Activated CD4-positive, alpha-beta T cell treated with anti-CD3 and anti-CD28 coated beads, Interleukin-2, amount 10 ng/mL, durations not matched to agents 24 days and 14 days (primary cell): ENCODE measurements at regions of chr14 and their contacts with region 1.

Region 1: GRCh38 chr14:88013750-88014349 is 8.9 kb downstream of the GPR65 start:
- DNase-seq: peak; percentile 72
- H3K4me3 Mint-ChIP-seq: no peak overlapping the region
- H3K27ac Mint-ChIP-seq: peak overlapping the region; percentile 4
- H3K4me1 Mint-ChIP-seq: peaks cover 46% of the 10 kb centered on the region
- H3K27me3 Mint-ChIP-seq: no peaks in the 10 kb centered on the region

Region 2: DNA sequence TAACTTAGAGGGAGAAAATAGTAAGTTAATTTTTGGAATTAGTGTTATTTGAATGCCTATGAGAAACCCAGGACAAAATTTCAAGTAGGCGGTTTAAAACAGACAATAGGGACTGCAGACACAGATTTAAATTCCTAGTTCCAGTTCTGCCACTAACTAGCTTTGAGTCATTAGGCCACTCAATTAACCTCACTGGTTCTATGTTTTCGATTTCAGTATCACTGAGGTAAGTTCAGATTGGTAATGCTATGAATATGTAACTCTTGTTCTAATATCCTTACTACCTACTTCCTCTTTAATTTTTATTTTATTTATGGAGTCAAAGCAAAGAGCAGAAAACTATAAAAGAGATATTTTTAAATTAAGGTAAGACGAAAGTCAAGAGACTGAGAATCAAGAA is 73.5 kb before region 1 on chr14:
- intact Hi-C with region 1: no loop called
- DNase-seq: no peak
- H3K4me3 Mint-ChIP-seq: no peak overlapping the region
- H3K27ac Mint-ChIP-seq: no peak overlapping the region
- H3K4me1 Mint-ChIP-seq: peaks cover 3% of the 10 kb centered on the region
- H3K27me3 Mint-ChIP-seq: no peaks in the 10 kb centered on the region

Region 3: GRCh38 chr14:87966816-87967215 is 47.0 kb before region 1 on chr14:
- intact Hi-C with region 1: no loop called
- DNase-seq: no peak
- H3K4me3 Mint-ChIP-seq: no peak overlapping the region
- H3K27ac Mint-ChIP-seq: no peak overlapping the region
- H3K4me1 Mint-ChIP-seq: no peaks in the 10 kb centered on the region
- H3K27me3 Mint-ChIP-seq: no peaks in the 10 kb centered on the region

Region 4: DNA sequence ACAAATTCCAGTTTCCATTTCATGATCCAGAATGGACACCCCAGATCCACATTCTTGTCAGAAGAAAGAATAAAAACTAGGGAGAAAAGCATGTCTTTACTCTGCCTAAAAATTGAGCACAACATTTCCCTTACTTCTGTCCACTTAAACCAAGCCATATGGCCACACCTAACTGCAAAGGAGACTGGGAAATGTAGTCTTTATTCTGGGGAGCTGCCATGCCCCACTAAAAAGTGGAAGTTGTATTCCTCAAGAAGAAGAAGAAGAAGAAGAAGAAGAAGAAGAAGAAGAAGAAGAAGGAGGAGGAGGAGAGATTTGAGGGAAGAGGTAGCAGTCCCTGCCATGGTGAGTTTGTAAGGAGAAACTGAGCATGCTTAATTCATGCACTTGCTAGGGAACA is 75.6 kb after region 1 on chr14:
- intact Hi-C with region 1: no loop called
- DNase-seq: no peak
- H3K4me3 Mint-ChIP-seq: no peak overlapping the region
- H3K27ac Mint-ChIP-seq: no peak overlapping the region
- H3K4me1 Mint-ChIP-seq: no peaks in the 10 kb centered on the region
- H3K27me3 Mint-ChIP-seq: peaks cover 4% of the 10 kb centered on the region

Region 5: GRCh38 chr14:88168498-88169165 is 154.8 kb after region 1 on chr14:
- intact Hi-C with region 1: loop called (anchors 1 kb)
- DNase-seq: peak; percentile 87
- H3K4me3 Mint-ChIP-seq: peak overlapping the region; percentile 26
- H3K27ac Mint-ChIP-seq: no peak overlapping the region
- H3K4me1 Mint-ChIP-seq: peaks cover 6% of the 10 kb centered on the region
- H3K27me3 Mint-ChIP-seq: peaks cover 40% of the 10 kb centered on the region